Activated T-helper 2 cell treated with anti-CD3 and anti-CD28 coated beads, Interferon-gamma antibody, Interleukin-2, Interleukin-4, amounts not matched to agents 10 μg/mL and 5 μg/mL and 100 μg/mL, durations not matched to agents 14 hours and 24 hours and 36 hours (primary cell): ENCODE measurements at regions of chr14 and their contacts with region 1.

Region 1: DNA sequence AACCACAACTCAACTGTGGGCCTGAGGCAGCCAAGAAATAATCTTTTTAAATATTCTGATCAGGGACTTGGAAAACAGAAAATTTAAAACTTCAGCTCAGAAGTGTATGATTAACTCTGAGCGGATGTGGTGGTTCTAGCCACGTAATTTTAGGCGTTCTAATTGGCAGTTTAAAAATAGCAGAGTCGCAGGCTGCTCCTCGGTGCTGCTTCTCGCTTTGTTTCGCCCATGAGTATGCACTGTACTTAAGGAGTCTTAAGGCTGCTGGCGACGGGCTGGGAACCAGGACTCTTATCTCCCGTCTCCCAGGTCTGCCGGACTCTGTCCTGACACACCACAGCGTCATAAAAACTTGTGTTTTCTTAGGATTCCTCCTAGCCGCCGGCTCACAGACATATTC is 113.4 kb upstream of the PELI2 start:
- DNase-seq: peak; percentile 20
- H3K4me3 Mint-ChIP-seq: peak overlapping the region; percentile 28
- H3K27ac Mint-ChIP-seq: peak overlapping the region; percentile 52
- H3K4me1 Mint-ChIP-seq: peaks cover 27% of the 10 kb centered on the region
- H3K27me3 Mint-ChIP-seq: peaks cover 33% of the 10 kb centered on the region

Region 2: GRCh38 chr14:55446218-55446654 is 558.5 kb before region 1 on chr14:
- intact Hi-C with region 1: loop called (anchors 5 kb)
- DNase-seq: peak; percentile 22
- H3K4me3 Mint-ChIP-seq: no peak overlapping the region
- H3K27ac Mint-ChIP-seq: no peak overlapping the region
- H3K4me1 Mint-ChIP-seq: peaks cover 23% of the 10 kb centered on the region
- H3K27me3 Mint-ChIP-seq: no peaks in the 10 kb centered on the region

Region 3: DNA sequence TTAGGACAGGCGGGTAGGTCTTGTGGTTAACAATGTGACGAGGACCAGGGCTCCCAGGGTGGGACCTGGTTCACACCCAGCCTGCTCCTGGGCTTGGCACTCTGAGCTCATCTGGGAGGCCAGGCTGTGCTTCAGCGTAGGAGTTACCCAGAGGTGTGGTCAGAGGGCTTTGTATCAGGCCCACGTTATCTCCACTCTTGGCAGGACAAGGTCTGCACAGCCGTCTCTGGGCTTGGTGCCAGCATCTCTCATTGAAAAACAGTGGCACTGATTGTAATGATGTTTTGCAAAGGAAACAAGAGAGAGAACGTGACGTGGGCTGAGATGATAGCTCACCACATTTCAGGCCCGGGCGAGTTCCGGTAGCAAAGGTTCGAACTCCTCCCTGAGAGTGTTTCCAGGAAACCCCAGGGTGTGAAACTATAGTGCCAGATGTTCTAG is 197.7 kb before region 1 on chr14:
- intact Hi-C with region 1: loop called (anchors 10 kb)
- DNase-seq: peak; percentile 52
- H3K4me3 Mint-ChIP-seq: no peak overlapping the region
- H3K27ac Mint-ChIP-seq: peak overlapping the region; percentile 42
- H3K4me1 Mint-ChIP-seq: peaks cover 28% of the 10 kb centered on the region
- H3K27me3 Mint-ChIP-seq: peaks cover under 1% of the 10 kb centered on the region

Region 4: GRCh38 chr14:56117765-56118610 is 113.2 kb after region 1 on chr14 and contains the start of gene PELI2:
- intact Hi-C with region 1: loop called (anchors 10 kb)
- DNase-seq: peak; percentile 62
- H3K4me3 Mint-ChIP-seq: peak within 1 kb of the TSS; percentile 88
- H3K27ac Mint-ChIP-seq: peak within 1 kb of the TSS; percentile 54
- H3K4me1 Mint-ChIP-seq: peaks cover 22% of the 10 kb centered on the region
- H3K27me3 Mint-ChIP-seq: peaks cover 46% of the 10 kb centered on the region
- total RNA-seq, gene PELI2: 2.3 and 2.8 TPM in 2 replicates

Region 5: DNA sequence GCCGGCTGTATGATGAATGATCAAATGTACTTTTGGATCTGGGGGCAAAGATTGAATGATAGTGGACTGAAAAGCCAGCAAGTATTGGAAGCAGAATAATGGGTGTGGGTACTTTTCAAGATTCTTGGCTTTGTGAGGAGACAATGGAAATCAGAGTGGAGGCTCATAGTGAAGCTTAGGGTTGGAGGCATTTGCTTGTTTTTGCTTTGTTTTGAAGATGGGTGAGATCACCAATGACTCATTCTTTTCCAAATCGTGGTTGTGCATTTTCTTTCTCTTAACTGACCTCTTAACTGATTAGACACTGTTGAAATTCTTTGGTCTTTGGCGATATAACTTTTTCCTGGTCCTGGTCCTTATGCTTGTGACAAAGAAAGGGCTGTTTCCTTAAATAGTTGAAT is 167.8 kb after region 1 on chr14:
- intact Hi-C with region 1: loop called (anchors 10 kb)
- DNase-seq: no peak
- H3K4me3 Mint-ChIP-seq: no peak overlapping the region
- H3K27ac Mint-ChIP-seq: peak overlapping the region; percentile 78
- H3K4me1 Mint-ChIP-seq: peaks cover 24% of the 10 kb centered on the region
- H3K27me3 Mint-ChIP-seq: no peaks in the 10 kb centered on the region